ENCODE measurements at regions of chr16 and their contacts with region 1.

Region 1: DNA sequence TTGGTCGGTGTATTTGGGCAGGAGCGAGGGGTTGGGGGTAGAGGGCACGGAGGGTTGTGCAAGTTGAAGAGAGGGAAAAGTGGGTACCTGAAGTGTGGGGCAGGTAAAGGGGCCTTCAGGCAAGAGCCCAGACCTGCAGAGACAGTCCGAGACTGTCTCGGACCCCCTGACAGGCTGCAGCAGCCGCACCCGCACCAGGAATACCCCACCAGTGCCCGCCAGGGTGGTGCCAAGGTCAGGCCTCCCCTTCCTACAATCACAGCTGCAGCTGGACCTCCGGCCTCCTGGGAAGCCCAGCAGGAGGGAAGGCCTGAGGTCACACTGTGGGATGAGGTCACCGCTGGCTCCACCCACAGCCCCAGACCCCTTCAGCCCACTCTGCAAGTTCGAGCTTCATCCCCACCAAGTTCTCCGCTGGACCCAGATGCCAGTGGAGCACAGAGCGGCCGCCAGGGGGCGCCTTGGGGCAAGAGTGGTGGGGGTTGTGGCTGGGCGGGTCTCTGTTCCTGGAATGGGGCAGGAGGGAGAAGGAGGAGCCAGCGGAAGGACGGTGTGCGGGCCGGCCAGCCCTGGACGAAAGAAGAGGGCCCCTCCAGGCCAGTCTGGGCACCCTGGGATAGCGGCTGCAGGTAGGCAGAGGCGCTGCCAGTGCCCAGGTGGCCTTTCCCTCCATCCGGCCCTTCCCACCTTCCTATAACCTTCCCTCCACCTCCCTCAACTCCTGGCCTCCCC is at the start of gene HSD3B7:
- H3K4me3 ChIP-seq: no peak within 1 kb of the TSS
- H3K27ac ChIP-seq: no peak within 1 kb of the TSS
- H3K4me1 ChIP-seq: no peaks in the 10 kb centered on the region
- CTCF ChIP-seq: peak; percentile 93

Region 2: DNA sequence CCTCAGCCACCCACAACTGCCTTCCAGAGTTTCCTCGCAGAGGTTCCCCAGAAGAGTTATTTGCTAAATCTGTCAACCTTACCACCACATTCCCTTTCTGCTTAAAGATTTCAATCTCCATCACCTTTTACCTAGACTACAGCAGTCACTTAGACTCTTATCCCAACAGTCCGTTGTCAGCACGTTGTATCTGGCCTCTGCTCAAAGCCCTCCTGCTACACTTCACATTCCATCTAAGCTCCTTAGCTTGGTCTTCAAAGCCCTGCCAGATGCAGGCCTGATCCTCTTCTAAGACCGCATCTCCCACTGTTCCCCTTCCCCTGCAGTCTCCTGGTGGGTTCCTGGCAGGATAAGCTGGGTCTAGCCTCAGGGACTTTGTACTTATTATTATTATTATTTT is 296.2 kb before region 1 on chr16:
- CTCF ChIA-PET with region 1: no interaction called
- POLR2A ChIA-PET with region 1: no interaction called
- H3K4me3 ChIP-seq: no peak overlapping the region
- H3K27ac ChIP-seq: no peak overlapping the region
- H3K4me1 ChIP-seq: no peaks in the 10 kb centered on the region
- CTCF ChIP-seq: no peak

Region 3: GRCh38 chr16:30997887-30998711 is 13.3 kb after region 1 on chr16:
- CTCF ChIA-PET with region 1: interaction called, 23 read pairs
- POLR2A ChIA-PET with region 1: interaction called, 5 read pairs
- H3K4me3 ChIP-seq: no peak overlapping the region
- H3K27ac ChIP-seq: no peak overlapping the region
- H3K4me1 ChIP-seq: peaks cover 5% of the 10 kb centered on the region
- CTCF ChIP-seq: no peak